CD4-positive, alpha-beta memory T cell (primary cell): ENCODE measurements at regions of chr1 and their contacts with region 1.

Region 1: DNA sequence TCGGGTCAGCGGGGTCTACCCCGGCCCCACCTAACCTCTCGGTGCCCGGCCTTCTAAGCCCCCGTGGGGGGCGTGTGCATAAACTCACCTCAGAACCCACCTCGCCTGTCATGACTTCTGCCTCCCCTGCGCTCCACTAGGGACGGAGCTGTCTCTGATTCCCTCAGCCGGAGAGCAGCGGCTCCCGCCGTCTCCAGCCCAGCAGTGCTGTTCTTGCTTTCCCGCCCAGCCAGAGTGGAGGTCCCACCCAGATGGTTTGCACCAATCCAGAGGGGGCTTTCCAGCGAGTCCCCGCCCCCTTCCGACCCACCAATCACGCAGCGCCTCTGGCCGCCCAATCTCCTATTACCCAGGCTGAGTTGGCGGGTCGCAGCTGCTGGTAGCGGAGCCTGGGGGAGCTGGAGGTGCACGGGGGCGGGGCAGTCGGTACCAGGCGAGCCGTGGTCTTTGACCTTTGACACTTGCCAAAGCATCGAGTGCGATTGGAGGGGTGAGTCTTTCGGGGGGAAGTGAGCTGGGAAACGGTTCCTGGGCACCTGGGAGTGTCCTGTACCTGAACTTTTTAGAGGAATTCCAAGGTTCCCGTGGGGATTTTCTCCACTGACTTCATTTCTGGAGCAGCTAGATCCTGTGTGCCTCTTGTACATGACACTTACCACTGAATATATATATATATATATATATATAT is at the start of gene CLSPN:
- DNase-seq: peak; percentile 90 to 94 (median 92)
- H3K4me3 ChIP-seq: peak within 1 kb of the TSS; percentile 74 to 84
- H3K4me3 Mint-ChIP-seq: peak within 1 kb of the TSS; percentile 95 to 99 (median 98)
- H3K27ac ChIP-seq: peak within 1 kb of the TSS; percentile 82
- H3K27ac Mint-ChIP-seq: peak within 1 kb of the TSS; percentile 86 to 97 (median 96)
- H3K4me1 ChIP-seq: peaks cover 7% of the 10 kb centered on the region
- H3K4me1 Mint-ChIP-seq: peaks cover 6 to 17% (median 10%) of the 10 kb centered on the region in 4 donors
- H3K27me3 ChIP-seq: no peaks in the 10 kb centered on the region
- H3K27me3 Mint-ChIP-seq: no peaks in the 10 kb centered on the region
- total RNA-seq, gene CLSPN: 0.28 to 0.90 TPM

Region 2: DNA sequence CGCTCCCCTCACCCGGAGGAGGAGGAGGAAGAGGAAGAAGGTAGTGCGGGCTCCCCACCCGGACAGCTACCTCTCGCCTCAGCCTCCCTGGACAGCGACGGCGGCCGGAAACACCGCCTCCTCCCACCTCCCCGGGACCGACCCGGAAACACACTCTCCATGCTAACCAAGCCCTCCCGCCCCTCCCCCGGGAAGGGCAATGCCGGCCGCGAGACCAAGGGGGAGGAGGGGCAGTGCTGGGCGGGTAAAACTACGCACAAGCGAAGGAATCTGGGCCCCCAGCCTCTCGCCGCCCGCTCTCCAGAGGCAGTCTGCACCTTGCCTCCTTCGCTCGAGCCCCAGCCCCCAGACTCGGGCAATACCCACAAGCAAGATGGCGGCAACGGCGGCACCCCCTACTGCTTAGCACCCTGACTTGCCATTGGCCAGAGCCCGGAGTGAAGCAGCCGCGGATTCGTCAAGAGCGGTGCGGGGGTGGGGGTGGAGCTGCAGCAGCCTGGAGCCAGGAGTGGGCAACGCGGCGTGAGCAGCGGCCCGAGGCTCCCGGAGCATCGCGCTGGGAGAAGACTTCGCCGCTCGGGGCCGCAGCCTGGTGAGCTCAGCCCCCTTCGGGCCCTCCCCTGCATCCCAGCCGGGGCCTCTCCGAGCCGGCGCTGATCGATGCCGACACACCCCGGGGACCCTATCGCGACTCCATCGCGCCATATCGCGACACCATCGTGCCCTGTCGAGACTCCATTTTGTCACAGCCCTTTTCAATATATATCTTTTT is 212.4 kb before region 1 on chr1 and contains the starts of genes KIAA0319L and NCDN:
- CTCF ChIA-PET with region 1: interaction called, 3 read pairs
- POLR2A ChIA-PET with region 1: interaction called, 14 read pairs
- intact Hi-C with region 1: no loop called
- DNase-seq: peak; percentile 93 to 97 (median 95)
- H3K4me3 ChIP-seq: peak within 1 kb of the TSS; percentile 92 to 100
- H3K4me3 Mint-ChIP-seq: peak within 1 kb of the TSS; percentile 94 to 99 (median 97)
- H3K27ac ChIP-seq: peak within 1 kb of the TSS; percentile 70
- H3K27ac Mint-ChIP-seq: peak within 1 kb of the TSS; percentile 95 to 100 (median 96)
- H3K4me1 ChIP-seq: peaks cover 52% of the 10 kb centered on the region
- H3K4me1 Mint-ChIP-seq: peaks cover 37 to 77% (median 48%) of the 10 kb centered on the region in 4 donors
- H3K27me3 ChIP-seq: no peaks in the 10 kb centered on the region
- H3K27me3 Mint-ChIP-seq: no peaks in the 10 kb centered on the region
- total RNA-seq, gene KIAA0319L: 79.4 to 82.9 TPM
- total RNA-seq, gene NCDN: 29.7 to 32.2 TPM

Region 3: GRCh38 chr1:35577071-35577998 is 192.6 kb before region 1 on chr1:
- CTCF ChIA-PET with region 1: interaction called, 6 read pairs
- POLR2A ChIA-PET with region 1: interaction called, 12 read pairs
- intact Hi-C with region 1: no loop called
- DNase-seq: peak; percentile 61 to 76 (median 71)
- H3K4me3 ChIP-seq: peak overlapping the region; percentile 42 to 50
- H3K4me3 Mint-ChIP-seq: peak overlapping the region; percentile 82 to 96 (median 88)
- H3K27ac ChIP-seq: peak overlapping the region; percentile 58
- H3K27ac Mint-ChIP-seq: peak overlapping the region; percentile 32 to 93 (median 77)
- H3K4me1 ChIP-seq: peaks cover 28% of the 10 kb centered on the region
- H3K4me1 Mint-ChIP-seq: peaks cover 10 to 31% (median 20%) of the 10 kb centered on the region in 4 donors
- H3K27me3 ChIP-seq: no peaks in the 10 kb centered on the region
- H3K27me3 Mint-ChIP-seq: peaks cover 1 to 2% of the 10 kb centered on the region in 2 donors

Region 4: DNA sequence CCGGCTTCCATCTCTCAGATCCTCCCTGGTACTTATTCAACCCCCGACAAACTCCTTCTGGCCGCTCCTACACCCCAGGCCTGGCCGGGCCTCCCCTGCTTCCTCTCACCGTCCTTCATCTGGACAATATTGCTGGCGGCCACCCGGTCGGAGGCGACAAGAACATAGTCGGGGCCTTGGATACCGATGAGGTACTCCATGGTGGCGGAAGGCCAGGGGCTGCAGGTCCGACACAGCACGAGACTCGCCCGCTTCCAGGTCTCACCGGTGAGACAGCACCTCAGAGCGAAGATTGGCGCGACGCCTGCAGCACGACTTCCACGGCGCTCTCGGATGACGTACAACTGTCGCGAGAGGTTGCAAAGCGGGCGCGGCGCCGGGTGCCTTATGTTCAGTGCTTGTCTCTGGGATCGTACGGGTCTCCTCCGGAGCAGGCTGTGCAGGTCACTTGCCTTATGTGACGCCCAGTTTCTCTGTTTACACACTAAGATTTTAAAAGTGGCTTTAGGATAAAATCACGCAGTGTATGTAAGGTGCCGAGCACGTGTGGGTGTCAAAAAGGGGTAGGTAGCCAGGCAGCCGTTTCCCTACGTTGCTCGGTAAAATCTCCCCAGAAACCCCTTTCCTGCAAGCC is 128.6 kb before region 1 on chr1 and contains the start of gene PSMB2:
- CTCF ChIA-PET with region 1: no interaction called
- POLR2A ChIA-PET with region 1: interaction called, 3 read pairs
- intact Hi-C with region 1: loop called (anchors 5 kb)
- DNase-seq: peak; percentile 94 to 95 (median 94)
- H3K4me3 ChIP-seq: peak within 1 kb of the TSS; percentile 94 to 98
- H3K4me3 Mint-ChIP-seq: peak within 1 kb of the TSS; percentile 98 to 100 (median 99)
- H3K27ac ChIP-seq: peak within 1 kb of the TSS; percentile 81
- H3K27ac Mint-ChIP-seq: peak within 1 kb of the TSS; percentile 98 to 100 (median 99)
- H3K4me1 ChIP-seq: peaks cover 47% of the 10 kb centered on the region
- H3K4me1 Mint-ChIP-seq: peaks cover 26 to 44% (median 36%) of the 10 kb centered on the region in 4 donors
- H3K27me3 ChIP-seq: peaks cover 5% of the 10 kb centered on the region
- H3K27me3 Mint-ChIP-seq: peaks cover 9 to 23% of the 10 kb centered on the region in 2 donors
- total RNA-seq, gene PSMB2: 25.5 to 28.2 TPM

Region 5: GRCh38 chr1:35807614-35808449 is 37.9 kb after region 1 on chr1 and contains the start of gene AGO4:
- CTCF ChIA-PET with region 1: interaction called, 5 read pairs
- POLR2A ChIA-PET with region 1: interaction called, 6 read pairs
- intact Hi-C with region 1: loop called (anchors 5 kb)
- DNase-seq: peak in 4 of 5 donors; percentile 21 to 36 (median 30)
- H3K4me3 ChIP-seq: peak within 1 kb of the TSS; percentile 26 to 77
- H3K4me3 Mint-ChIP-seq: peak within 1 kb of the TSS; percentile 90 to 96 (median 94)
- H3K27ac ChIP-seq: peak within 1 kb of the TSS; percentile 71
- H3K27ac Mint-ChIP-seq: peak within 1 kb of the TSS; percentile 90 to 97 (median 93)
- H3K4me1 ChIP-seq: peaks cover 45% of the 10 kb centered on the region
- H3K4me1 Mint-ChIP-seq: peaks cover 30 to 58% (median 40%) of the 10 kb centered on the region in 4 donors
- H3K27me3 ChIP-seq: no peaks in the 10 kb centered on the region
- H3K27me3 Mint-ChIP-seq: no peaks in the 10 kb centered on the region
- total RNA-seq, gene AGO4: 30.1 to 32.9 TPM